Activated T-helper 2 cell treated with anti-CD3 and anti-CD28 coated beads, Interferon-gamma antibody, Interleukin-2, Interleukin-4, amounts not matched to agents 10 μg/mL and 5 μg/mL and 100 μg/mL, durations not matched to agents 14 hours and 24 hours and 36 hours (primary cell): ENCODE measurements at regions of chr6 and their contacts with region 1.

Region 1: DNA sequence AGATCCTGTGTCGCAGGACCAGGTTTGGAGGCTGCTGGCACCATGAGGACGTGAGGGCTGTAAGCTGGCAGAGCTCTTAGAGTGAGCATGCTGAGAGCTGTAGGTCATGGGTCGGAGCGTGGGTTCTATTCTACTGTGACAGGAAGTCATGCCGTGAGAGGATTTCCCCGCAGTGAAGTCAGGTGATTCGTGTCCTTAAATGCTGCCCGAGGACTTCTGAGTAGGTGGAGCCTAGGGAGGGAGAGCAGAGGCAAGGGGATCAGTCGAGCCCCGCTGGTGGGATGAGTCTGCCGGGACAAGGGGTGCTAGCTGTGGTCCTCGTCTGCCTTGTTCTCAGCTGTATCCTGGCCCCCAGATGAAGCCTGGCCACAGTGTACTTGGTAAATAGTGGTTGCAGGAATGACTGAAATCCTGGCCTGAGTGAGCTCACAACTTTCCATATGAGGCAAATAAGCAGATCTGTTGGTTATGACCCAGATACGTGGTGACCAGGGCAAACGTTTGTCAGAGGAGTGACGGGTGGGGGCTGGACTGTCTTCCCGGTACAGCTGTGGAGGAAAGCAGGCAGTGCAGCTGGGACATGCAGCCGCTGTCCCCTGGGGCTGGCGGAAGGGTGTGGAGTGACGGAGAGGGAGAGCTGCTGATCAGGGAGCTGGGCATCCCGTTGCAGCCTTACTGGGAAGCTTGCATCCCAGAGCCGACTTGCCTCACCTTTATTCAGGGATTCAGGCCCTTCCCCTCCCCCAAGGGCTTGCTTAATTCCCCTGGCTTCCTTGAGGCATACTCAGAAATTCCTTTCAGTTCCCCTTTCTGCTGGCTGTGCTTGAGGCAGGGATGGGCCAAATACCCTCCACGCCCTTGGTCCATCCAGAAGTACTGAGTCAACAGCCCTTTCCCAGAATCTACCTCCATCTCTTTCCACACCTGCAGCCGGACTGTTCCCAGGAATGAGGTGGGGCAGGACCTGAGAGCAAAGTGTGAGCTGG is 250.9 kb upstream of the RREB1 start:
- DNase-seq: peak; percentile 33
- H3K4me3 Mint-ChIP-seq: peak overlapping the region; percentile 55
- H3K27ac Mint-ChIP-seq: peak overlapping the region; percentile 93
- H3K4me1 Mint-ChIP-seq: peaks cover 41% of the 10 kb centered on the region
- H3K27me3 Mint-ChIP-seq: no peaks in the 10 kb centered on the region

Region 2: GRCh38 chr6:6918216-6918983 is 61.6 kb after region 1 on chr6:
- intact Hi-C with region 1: loop called (anchors 1 kb)
- DNase-seq: peak; percentile 24
- H3K4me3 Mint-ChIP-seq: no peak overlapping the region
- H3K27ac Mint-ChIP-seq: peak overlapping the region; percentile 16
- H3K4me1 Mint-ChIP-seq: peaks cover 24% of the 10 kb centered on the region
- H3K27me3 Mint-ChIP-seq: peaks cover 31% of the 10 kb centered on the region

Region 3: GRCh38 chr6:7033202-7033601 is 176.4 kb after region 1 on chr6:
- intact Hi-C with region 1: no loop called
- DNase-seq: no peak
- H3K4me3 Mint-ChIP-seq: no peak overlapping the region
- H3K27ac Mint-ChIP-seq: no peak overlapping the region
- H3K4me1 Mint-ChIP-seq: no peaks in the 10 kb centered on the region
- H3K27me3 Mint-ChIP-seq: peaks cover 57% of the 10 kb centered on the region

Region 4: GRCh38 chr6:8315154-8315553 is 1458.3 kb after region 1 on chr6:
- intact Hi-C with region 1: no loop called
- DNase-seq: no peak
- H3K4me3 Mint-ChIP-seq: no peak overlapping the region
- H3K27ac Mint-ChIP-seq: no peak overlapping the region
- H3K4me1 Mint-ChIP-seq: no peaks in the 10 kb centered on the region
- H3K27me3 Mint-ChIP-seq: no peaks in the 10 kb centered on the region